Activated CD8-positive, alpha-beta T cell treated with anti-CD3 and anti-CD28 coated beads for 36 hours (primary cell): ENCODE measurements at regions of chr11 and their contacts with region 1.

Region 1: GRCh38 chr11:69101115-69101791 is 52.5 kb downstream of the TPCN2 start:
- DNase-seq: peak; percentile 78
- ATAC-seq: peak; percentile 99
- H3K4me3 Mint-ChIP-seq: no peak overlapping the region
- H3K27ac Mint-ChIP-seq: no peak overlapping the region
- H3K4me1 Mint-ChIP-seq: peaks cover 2% of the 10 kb centered on the region
- H3K27me3 Mint-ChIP-seq: no peaks in the 10 kb centered on the region
- CTCF ChIP-seq: peak; percentile 99

Region 2: GRCh38 chr11:69122642-69123431 is 21.6 kb after region 1 on chr11:
- CTCF ChIA-PET with region 1: no interaction called
- POLR2A ChIA-PET with region 1: no interaction called
- intact Hi-C with region 1: no loop called
- DNase-seq: peak; percentile 95
- ATAC-seq: peak; percentile 93
- H3K4me3 Mint-ChIP-seq: peak overlapping the region; percentile 14
- H3K27ac Mint-ChIP-seq: peak overlapping the region; percentile 86
- H3K4me1 Mint-ChIP-seq: peaks cover 38% of the 10 kb centered on the region
- H3K27me3 Mint-ChIP-seq: no peaks in the 10 kb centered on the region
- CTCF ChIP-seq: no peak

Region 3: GRCh38 chr11:69642913-69643632 is 541.8 kb after region 1 on chr11:
- CTCF ChIA-PET with region 1: interaction called, 24 read pairs
- POLR2A ChIA-PET with region 1: interaction called, 3 read pairs
- intact Hi-C with region 1: loop called (anchors 5 kb)
- DNase-seq: peak; percentile 77
- ATAC-seq: peak; percentile 82
- H3K4me3 Mint-ChIP-seq: peak overlapping the region; percentile 66
- H3K27ac Mint-ChIP-seq: peak overlapping the region; percentile 63
- H3K4me1 Mint-ChIP-seq: peaks cover 19% of the 10 kb centered on the region
- H3K27me3 Mint-ChIP-seq: peaks cover 24% of the 10 kb centered on the region
- CTCF ChIP-seq: peak; percentile 98